ENCODE measurements at regions of chr6 and their contacts with region 1.

Region 1: DNA sequence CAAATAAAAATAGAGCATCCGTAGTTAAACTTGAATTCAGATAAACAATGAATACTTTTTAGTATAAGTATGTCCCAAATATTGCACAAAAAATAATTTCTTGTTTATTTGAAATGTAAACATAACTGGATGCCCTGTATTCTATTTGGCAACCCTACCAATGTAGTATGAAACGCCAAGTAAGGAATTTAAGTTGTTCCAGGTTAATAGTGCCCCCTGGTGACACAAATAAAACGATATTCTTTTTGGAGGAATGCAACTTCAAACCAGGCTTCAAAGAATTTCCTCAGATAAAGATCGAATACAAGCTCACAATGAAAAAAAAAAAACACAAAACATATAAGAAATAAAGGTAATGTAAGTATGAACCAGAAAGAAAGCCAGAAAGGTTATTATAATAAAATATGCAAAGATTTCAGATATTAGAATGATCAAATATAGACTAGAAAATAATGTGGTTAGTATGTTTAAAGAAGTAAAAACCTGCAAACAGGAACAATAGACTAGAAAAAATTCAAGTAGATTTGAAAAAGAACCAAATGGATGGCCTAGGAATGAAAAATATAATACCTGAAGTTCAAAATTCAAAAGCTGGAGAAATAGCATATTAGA is 18.4 kb upstream of the AKAP7 start:
- DNase-seq: no peak
- ATAC-seq: peak; percentile 34
- H3K4me3 Mint-ChIP-seq: no peak overlapping the region
- H3K27ac Mint-ChIP-seq: no peak overlapping the region
- H3K4me1 Mint-ChIP-seq: peaks cover 14% of the 10 kb centered on the region
- H3K27me3 Mint-ChIP-seq: no peaks in the 10 kb centered on the region
- CTCF ChIP-seq: peak; percentile 33

Region 2: GRCh38 chr6:131173680-131174079 is 56.8 kb after region 1 on chr6:
- CTCF ChIA-PET with region 1: no interaction called
- POLR2A ChIA-PET with region 1: no interaction called
- intact Hi-C with region 1: no loop called
- DNase-seq: no peak
- ATAC-seq: no peak
- H3K4me3 Mint-ChIP-seq: no peak overlapping the region
- H3K27ac Mint-ChIP-seq: no peak overlapping the region
- H3K4me1 Mint-ChIP-seq: no peaks in the 10 kb centered on the region
- H3K27me3 Mint-ChIP-seq: no peaks in the 10 kb centered on the region
- CTCF ChIP-seq: no peak

Region 3: DNA sequence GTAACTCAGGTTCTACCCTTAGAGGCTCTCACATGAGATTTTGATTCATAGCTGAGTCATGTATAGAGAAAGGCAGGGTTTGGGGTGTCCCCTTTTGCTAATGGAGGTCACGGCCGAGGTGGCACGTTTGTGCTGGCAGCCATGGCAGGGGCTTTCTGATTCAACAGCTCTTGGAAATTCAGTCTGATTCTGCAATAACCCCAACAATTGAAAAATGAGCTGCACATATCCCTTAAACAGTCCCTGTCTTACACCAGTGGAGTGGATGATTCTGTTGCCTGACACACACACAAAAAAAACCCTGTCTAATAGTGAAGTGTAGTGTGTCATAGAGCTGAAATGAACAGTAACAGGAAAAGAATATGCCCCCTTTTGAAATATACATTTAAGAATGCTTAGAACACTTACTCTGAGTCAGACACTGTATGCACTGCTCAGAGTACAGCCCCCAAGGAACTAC is 415.8 kb after region 1 on chr6:
- CTCF ChIA-PET with region 1: interaction called, 14 read pairs
- POLR2A ChIA-PET with region 1: no interaction called
- intact Hi-C with region 1: loop called (anchors 1 kb)
- DNase-seq: no peak
- ATAC-seq: peak; percentile 47
- H3K4me3 Mint-ChIP-seq: no peak overlapping the region
- H3K27ac Mint-ChIP-seq: no peak overlapping the region
- H3K4me1 Mint-ChIP-seq: peaks cover 10% of the 10 kb centered on the region
- H3K27me3 Mint-ChIP-seq: no peaks in the 10 kb centered on the region
- CTCF ChIP-seq: no peak

Region 4: GRCh38 chr6:131597446-131597845 is 480.6 kb after region 1 on chr6:
- CTCF ChIA-PET with region 1: no interaction called
- POLR2A ChIA-PET with region 1: no interaction called
- intact Hi-C with region 1: loop called (anchors 2 kb)
- DNase-seq: no peak
- ATAC-seq: no peak
- H3K4me3 Mint-ChIP-seq: no peak overlapping the region
- H3K27ac Mint-ChIP-seq: no peak overlapping the region
- H3K4me1 Mint-ChIP-seq: no peaks in the 10 kb centered on the region
- H3K27me3 Mint-ChIP-seq: no peaks in the 10 kb centered on the region
- CTCF ChIP-seq: no peak

Region 5: DNA sequence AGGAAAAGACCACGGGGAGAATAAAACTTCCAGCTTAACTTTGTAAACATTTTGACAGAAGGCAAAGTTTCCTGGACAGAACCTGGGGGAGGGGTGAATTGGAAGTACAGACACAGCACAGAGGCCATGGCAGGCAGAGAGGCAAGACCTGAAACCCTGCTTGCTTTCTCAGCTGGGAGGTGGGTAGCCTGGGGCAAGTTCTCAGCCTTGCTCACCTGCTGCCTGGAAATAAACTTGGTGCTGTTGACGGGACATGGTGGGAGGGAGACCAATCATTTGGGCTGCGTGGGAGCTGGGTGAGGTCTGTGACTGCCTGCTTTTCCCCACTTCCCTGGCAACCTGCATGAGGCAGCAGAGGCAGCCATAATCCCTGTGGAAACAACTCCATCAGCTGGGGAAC is 1063.1 kb after region 1 on chr6:
- CTCF ChIA-PET with region 1: no interaction called
- POLR2A ChIA-PET with region 1: no interaction called
- intact Hi-C with region 1: no loop called
- DNase-seq: no peak
- ATAC-seq: no peak
- H3K4me3 Mint-ChIP-seq: no peak overlapping the region
- H3K27ac Mint-ChIP-seq: no peak overlapping the region
- H3K4me1 Mint-ChIP-seq: no peaks in the 10 kb centered on the region
- H3K27me3 Mint-ChIP-seq: peaks cover 9% of the 10 kb centered on the region
- CTCF ChIP-seq: no peak